ENCODE measurements at regions of chr1 and their contacts with region 1.

Region 1: GRCh38 chr1:162835157-162835899 is 25.6 kb downstream of the CCDC190 start:
- DNase-seq: no peak
- ATAC-seq: no peak
- H3K4me3 ChIP-seq: no peak overlapping the region
- H3K4me3 Mint-ChIP-seq: no peak overlapping the region
- H3K27ac ChIP-seq: no peak overlapping the region
- H3K27ac Mint-ChIP-seq: no peak overlapping the region
- H3K4me1 ChIP-seq: no peaks in the 10 kb centered on the region
- H3K4me1 Mint-ChIP-seq: no peaks in the 10 kb centered on the region
- H3K27me3 ChIP-seq: peaks cover 0 to 3% (median 0%) of the 10 kb centered on the region in 4 experiments
- H3K27me3 Mint-ChIP-seq: peaks cover 11% of the 10 kb centered on the region
- CTCF ChIP-seq: no peak

Region 2: DNA sequence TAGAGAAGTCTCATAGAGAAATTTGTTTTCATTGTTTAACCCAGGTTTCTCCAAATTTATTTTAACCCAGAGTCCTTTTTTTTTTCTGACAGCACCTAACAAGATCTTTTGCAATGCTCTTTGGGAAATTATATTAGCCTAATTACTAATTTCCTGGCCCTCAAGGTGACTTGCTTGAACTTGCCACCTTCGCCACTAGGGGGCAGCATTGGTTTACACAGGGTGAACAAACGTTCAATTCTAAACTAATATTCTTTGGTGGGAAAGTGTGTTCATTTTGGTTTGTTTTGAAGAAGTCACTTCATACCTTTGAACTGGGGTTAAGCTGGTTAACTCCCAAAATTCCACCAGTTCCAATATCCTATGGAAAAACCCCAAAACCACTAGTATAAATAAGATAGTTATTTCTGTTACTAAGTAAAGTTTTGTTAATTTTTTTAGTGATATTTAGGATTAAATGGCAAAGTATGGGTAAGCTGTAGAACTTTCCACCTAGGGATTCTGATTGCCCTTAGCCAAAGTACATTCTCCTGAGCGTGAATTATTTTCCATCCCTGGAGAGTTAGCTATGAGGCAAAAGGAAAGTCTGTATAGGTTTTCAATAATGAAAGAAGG is 12.6 kb after region 1 on chr1:
- CTCF ChIA-PET with region 1: interaction called, 14 read pairs
- POLR2A ChIA-PET with region 1: no interaction called
- intact Hi-C with region 1: no loop called
- DNase-seq: peak; percentile 69
- ATAC-seq: peak; percentile 51
- H3K4me3 ChIP-seq: no peak overlapping the region
- H3K4me3 Mint-ChIP-seq: no peak overlapping the region
- H3K27ac ChIP-seq: no peak overlapping the region
- H3K27ac Mint-ChIP-seq: no peak overlapping the region
- H3K4me1 ChIP-seq: no peaks in the 10 kb centered on the region
- H3K4me1 Mint-ChIP-seq: no peaks in the 10 kb centered on the region
- H3K27me3 ChIP-seq: peaks cover 0 to 4% (median 0%) of the 10 kb centered on the region in 4 experiments
- H3K27me3 Mint-ChIP-seq: peaks cover 16% of the 10 kb centered on the region
- CTCF ChIP-seq: peak; percentile 96

Region 3: GRCh38 chr1:163395790-163396189 is 560.5 kb after region 1 on chr1:
- CTCF ChIA-PET with region 1: no interaction called
- POLR2A ChIA-PET with region 1: no interaction called
- intact Hi-C with region 1: no loop called
- DNase-seq: no peak
- ATAC-seq: no peak
- H3K4me3 ChIP-seq: no peak overlapping the region
- H3K4me3 Mint-ChIP-seq: no peak overlapping the region
- H3K27ac ChIP-seq: no peak overlapping the region
- H3K27ac Mint-ChIP-seq: no peak overlapping the region
- H3K4me1 ChIP-seq: no peaks in the 10 kb centered on the region
- H3K4me1 Mint-ChIP-seq: no peaks in the 10 kb centered on the region
- H3K27me3 ChIP-seq: no peaks in the 10 kb centered on the region
- H3K27me3 Mint-ChIP-seq: peaks cover 22% of the 10 kb centered on the region
- CTCF ChIP-seq: no peak